ENCODE measurements at regions of chr11 and their contacts with region 1.

Region 1: GRCh38 chr11:125971618-125972017 is 25.8 kb downstream of the VSIG10L2 start:
- DNase-seq: no peak
- ATAC-seq: peak in 1 of 2 donors; percentile 22
- H3K4me3 ChIP-seq: no peak overlapping the region
- H3K27ac ChIP-seq: no peak overlapping the region
- H3K4me1 ChIP-seq: no peaks in the 10 kb centered on the region
- H3K27me3 ChIP-seq: no peaks in the 10 kb centered on the region

Region 2: GRCh38 chr11:125180413-125181305 is 791.0 kb before region 1 on chr11:
- intact Hi-C with region 1: no loop called
- DNase-seq: no peak
- ATAC-seq: peak in 1 of 2 donors; percentile 38
- H3K4me3 ChIP-seq: no peak overlapping the region
- H3K27ac ChIP-seq: no peak overlapping the region
- H3K4me1 ChIP-seq: peaks cover 2% of the 10 kb centered on the region
- H3K27me3 ChIP-seq: no peaks in the 10 kb centered on the region

Region 3: GRCh38 chr11:125990244-125990643 is 18.6 kb after region 1 on chr11:
- intact Hi-C with region 1: loop called in 1 of 4 experiments (anchors 2 kb)
- DNase-seq: no peak
- ATAC-seq: peak; percentile 74 to 84
- H3K4me3 ChIP-seq: no peak overlapping the region
- H3K27ac ChIP-seq: no peak overlapping the region
- H3K4me1 ChIP-seq: peaks cover 3% of the 10 kb centered on the region
- H3K27me3 ChIP-seq: no peaks in the 10 kb centered on the region

Measured in right cardiac atrium (tissue), 5 donors.